Cardiac septum (tissue), 1 donor: ENCODE measurements at regions of chr15 and their contacts with region 1.

Region 1: GRCh38 chr15:89647191-89647851 is 7.9 kb downstream of the KIF7 start:
- DNase-seq: peak; percentile 89

Region 2: GRCh38 chr15:89230277-89230676 is 417.0 kb before region 1 on chr15:
- intact Hi-C with region 1: no loop called
- DNase-seq: no peak

Region 3: GRCh38 chr15:89680282-89680873 is 33.1 kb after region 1 on chr15:
- intact Hi-C with region 1: loop called (anchors 5 kb)
- DNase-seq: no peak

Region 4: GRCh38 chr15:89740137-89740536 is 92.8 kb after region 1 on chr15:
- intact Hi-C with region 1: loop called (anchors 5 kb)
- DNase-seq: no peak